ENCODE measurements at regions of chr13 and their contacts with region 1.

Region 1: GRCh38 chr13:113816946-113817859 is 46.7 kb downstream of the GAS6 start:
- DNase-seq: peak; percentile 94 to 96
- ATAC-seq: peak; percentile 59
- H3K4me3 ChIP-seq: no peak overlapping the region
- H3K27ac ChIP-seq: peak overlapping the region in 1 of 2 donors; percentile 37
- H3K4me1 ChIP-seq: no peaks in the 10 kb centered on the region
- H3K27me3 ChIP-seq: no peaks in the 10 kb centered on the region

Region 2: DNA sequence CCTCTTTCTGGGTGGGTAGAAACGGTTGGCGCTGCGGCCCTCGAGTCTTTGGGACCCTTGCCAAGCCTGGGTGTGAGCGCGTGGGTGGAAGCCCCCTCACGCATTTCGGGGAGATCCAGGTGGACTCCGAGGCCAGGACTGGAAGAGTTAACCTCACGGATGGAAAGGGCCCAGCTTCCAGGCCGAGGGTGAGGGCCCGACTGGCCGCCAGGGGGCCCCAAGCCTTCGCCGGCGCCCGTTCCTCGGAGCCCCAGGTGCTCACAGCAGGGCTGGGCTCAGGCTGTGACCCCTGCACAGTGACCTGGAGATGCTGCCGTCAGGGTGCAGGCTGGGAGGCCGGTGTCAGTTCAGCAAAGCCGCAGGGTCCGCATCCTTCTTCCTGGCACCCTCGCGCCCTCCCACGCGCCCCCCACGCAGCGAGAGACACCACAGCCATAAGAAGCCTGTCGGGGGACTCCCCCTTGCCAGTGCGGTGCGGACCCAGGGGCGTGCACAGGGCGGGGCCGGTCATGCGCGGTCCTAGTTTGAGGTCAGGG is 92.4 kb before region 1 on chr13:
- intact Hi-C with region 1: no loop called
- DNase-seq: peak; percentile 82 to 89
- ATAC-seq: peak; percentile 93
- H3K4me3 ChIP-seq: peak overlapping the region in 1 of 2 donors; percentile 3
- H3K27ac ChIP-seq: peak overlapping the region in 1 of 2 donors; percentile 4
- H3K4me1 ChIP-seq: no peaks in the 10 kb centered on the region
- H3K27me3 ChIP-seq: no peaks in the 10 kb centered on the region

Region 3: DNA sequence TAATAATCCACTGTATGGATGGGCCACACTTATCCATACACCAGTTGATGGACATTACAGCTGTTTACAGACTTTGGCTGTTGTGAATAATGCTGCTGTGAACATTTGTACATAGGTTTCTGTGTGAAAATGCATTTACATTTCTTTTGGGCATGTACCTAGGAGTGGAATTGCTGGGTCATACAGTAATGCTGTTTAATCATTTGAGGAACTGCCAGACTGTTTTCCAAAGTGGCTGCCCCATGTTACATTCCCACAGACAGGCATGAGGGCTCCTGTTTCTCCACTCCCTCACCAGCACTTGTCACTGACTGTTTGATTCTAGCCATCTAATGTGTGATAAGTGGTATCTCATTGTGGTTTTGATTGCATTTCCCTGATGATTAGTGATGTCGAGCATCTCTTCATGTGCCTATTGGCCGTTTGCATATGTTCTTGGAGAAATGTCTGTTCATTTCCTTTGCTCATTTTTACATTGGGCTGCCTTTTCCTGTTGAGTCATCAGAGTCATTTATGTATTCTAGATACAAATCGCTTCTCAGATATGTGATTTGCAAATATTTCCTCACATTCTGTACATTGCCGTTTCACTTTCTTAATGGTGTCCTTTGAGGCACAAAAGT is 45.4 kb before region 1 on chr13:
- intact Hi-C with region 1: no loop called
- DNase-seq: no peak
- ATAC-seq: no peak
- H3K4me3 ChIP-seq: no peak overlapping the region
- H3K27ac ChIP-seq: no peak overlapping the region
- H3K4me1 ChIP-seq: no peaks in the 10 kb centered on the region
- H3K27me3 ChIP-seq: no peaks in the 10 kb centered on the region

Region 4: DNA sequence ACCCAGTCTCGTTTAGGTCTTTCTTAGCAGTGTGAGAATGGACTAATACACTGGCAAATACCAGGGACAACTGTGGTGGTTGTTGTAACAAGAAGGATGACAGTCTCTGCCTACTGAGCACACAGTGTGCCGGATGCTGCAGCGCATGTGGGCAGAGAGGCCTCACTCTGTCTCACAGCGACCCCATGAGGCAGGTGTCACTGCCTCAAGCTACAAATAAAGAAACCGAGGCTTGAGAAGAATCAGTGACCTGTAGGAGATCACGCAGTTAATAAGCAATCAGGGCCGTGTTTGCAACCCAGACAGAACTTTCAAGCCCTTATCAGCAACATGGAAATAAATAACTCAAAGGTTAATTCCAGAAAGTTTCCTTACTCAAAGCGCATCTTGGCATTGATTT is 87.2 kb after region 1 on chr13:
- intact Hi-C with region 1: loop called in 1 of 2 experiments (anchors 5 kb)
- DNase-seq: no peak
- ATAC-seq: peak; percentile 66
- H3K4me3 ChIP-seq: no peak overlapping the region
- H3K27ac ChIP-seq: peak overlapping the region in 1 of 2 donors; percentile 97
- H3K4me1 ChIP-seq: peaks cover 0 to 7% of the 10 kb centered on the region in 2 donors
- H3K27me3 ChIP-seq: no peaks in the 10 kb centered on the region

Region 5: DNA sequence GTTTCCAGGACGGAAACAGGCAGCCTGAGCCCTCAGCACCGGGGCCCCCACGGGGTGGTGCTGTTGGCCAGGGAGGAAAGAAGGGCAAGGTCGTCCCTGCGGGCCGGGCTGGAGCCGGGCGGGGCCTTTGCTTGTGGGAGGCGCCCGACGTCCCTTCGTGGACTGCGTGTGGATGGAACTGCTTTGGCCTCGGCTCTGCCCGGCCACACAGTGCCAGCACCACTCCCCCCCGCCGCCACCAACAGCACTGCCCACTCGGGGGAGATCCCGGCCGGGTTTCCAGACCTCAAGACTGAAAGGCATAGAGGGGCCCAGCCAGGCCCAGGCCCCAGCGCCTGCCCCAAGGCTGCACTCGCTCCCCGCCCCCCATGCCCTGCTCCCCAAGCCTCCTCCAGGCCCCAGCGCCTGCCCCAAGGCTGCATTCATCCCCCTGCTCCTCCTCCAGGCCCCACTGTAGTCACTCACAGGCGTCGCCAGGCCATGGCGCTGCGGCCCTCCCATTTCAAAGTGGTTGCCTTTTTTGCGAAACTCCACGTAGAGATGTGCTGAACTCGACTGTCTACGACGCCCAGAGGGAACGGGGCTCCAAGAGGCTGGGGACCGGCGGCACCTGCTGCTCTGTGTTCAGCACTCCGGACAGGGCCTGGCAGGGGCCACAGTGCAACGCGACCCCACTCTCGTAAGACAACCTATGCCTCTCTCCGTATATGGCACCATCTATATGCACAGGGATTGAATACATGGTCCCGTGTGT is 134.2 kb after region 1 on chr13:
- intact Hi-C with region 1: loop called (anchors 1 to 2 kb)
- DNase-seq: peak; percentile 93 to 96
- ATAC-seq: peak; percentile 92
- H3K4me3 ChIP-seq: no peak overlapping the region
- H3K27ac ChIP-seq: no peak overlapping the region
- H3K4me1 ChIP-seq: no peaks in the 10 kb centered on the region
- H3K27me3 ChIP-seq: no peaks in the 10 kb centered on the region

Region 6: DNA sequence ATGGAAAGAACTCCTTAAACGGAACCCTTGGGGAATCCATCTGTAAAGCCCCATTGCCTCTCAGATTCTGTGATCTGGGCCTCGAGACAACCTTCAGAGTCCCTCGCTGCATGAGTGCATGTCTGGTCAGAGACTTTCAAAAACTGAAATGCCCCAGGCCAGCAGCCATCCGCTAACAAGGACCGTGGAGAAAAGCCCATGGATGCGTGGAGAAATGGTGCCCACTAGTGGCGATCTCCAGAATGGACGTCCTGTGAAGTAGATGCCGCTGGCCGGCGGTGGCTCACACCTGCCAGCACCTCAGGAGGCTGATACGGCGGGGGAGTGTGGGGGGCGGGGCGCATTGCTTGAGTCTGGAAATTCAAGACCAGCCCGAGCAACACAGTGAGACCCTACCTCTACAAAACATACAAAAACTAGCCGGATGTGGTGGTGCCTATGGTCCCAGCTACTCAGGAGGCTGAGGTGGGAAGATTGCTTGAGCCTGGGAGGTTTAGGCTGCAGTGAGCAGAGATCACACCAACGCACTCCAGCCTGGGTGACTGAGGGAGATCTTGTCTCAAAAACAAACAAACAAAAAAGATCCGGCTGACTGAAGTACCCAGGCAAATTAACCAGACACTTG is 409.6 kb after region 1 on chr13:
- intact Hi-C with region 1: loop called (anchors 5 kb)
- DNase-seq: peak; percentile 89 to 94
- ATAC-seq: peak; percentile 94
- H3K4me3 ChIP-seq: no peak overlapping the region
- H3K27ac ChIP-seq: no peak overlapping the region
- H3K4me1 ChIP-seq: no peaks in the 10 kb centered on the region
- H3K27me3 ChIP-seq: no peaks in the 10 kb centered on the region

Measured in aorta (tissue), 5 donors.